Activated CD4-positive, alpha-beta T cell treated with anti-CD3 and anti-CD28 coated beads for 36 hours (primary cell): ENCODE measurements at regions of chr11 and their contacts with region 1.

Region 1: GRCh38 chr11:1852877-1853276 is at the start of gene LSP1:
- DNase-seq: peak; percentile 93
- ATAC-seq: peak; percentile 60
- H3K4me3 Mint-ChIP-seq: peak within 1 kb of the TSS; percentile 97
- H3K27ac Mint-ChIP-seq: peak within 1 kb of the TSS; percentile 98
- H3K4me1 Mint-ChIP-seq: peaks cover 66% of the 10 kb centered on the region
- H3K27me3 Mint-ChIP-seq: no peaks in the 10 kb centered on the region
- total RNA-seq, gene LSP1: 193 to 227 TPM

Region 2: GRCh38 chr11:1763796-1764661 is 88.8 kb before region 1 on chr11 and contains the start of gene CTSD:
- CTCF ChIA-PET with region 1: no interaction called
- POLR2A ChIA-PET with region 1: no interaction called
- intact Hi-C with region 1: loop called in 1 of 2 experiments (anchors 1 kb)
- DNase-seq: peak; percentile 94
- ATAC-seq: peak; percentile 91
- H3K4me3 Mint-ChIP-seq: peak within 1 kb of the TSS; percentile 83
- H3K27ac Mint-ChIP-seq: peak within 1 kb of the TSS; percentile 58
- H3K4me1 Mint-ChIP-seq: peaks cover 35% of the 10 kb centered on the region
- H3K27me3 Mint-ChIP-seq: no peaks in the 10 kb centered on the region
- total RNA-seq, gene CTSD: 38.8 to 41.5 TPM

Region 3: DNA sequence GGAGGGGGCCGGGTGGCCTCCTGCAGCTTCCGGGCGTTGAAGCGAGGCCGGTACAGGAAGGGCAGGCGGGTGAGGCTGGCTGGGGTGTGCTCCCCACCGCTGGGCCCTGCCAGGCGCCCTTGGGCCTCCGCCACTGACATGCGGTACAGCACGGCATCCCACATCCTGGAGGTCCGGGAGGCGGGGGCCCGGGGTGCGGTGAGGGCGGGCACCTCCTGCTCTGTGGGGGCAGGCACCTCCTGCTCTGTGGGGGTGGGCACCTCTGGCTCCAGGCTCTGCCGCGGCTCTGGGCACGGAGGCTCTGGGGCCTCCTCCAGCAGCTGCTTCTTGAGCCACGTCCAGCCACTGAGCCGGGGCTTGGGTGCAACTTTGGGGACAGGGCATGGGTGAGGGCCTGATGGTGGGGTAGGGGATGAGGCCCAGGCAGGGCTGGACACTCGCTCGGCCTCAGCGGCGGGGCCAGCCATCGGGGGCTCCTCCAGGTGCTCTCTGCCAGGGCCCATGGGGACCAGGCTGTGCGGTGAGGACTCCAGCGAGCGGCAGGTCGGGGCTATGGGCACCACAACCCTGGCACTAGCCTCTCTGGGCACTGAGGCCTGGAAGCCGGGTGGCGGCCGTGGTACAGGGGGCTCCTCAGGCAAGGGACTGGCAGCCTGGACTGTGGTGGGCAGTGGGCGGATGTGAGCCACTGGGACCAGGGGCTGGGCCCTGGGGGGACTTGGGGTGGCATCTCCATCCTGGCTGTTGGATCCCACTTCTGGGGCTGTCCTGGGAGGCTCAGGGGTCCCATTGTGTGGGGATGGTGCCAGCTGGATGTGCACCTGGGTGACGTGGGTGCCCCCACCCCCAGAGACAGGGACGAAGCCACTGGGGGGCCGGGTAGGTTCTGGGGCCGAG is 36.6 kb after region 1 on chr11:
- CTCF ChIA-PET with region 1: interaction called, 3 read pairs
- POLR2A ChIA-PET with region 1: no interaction called
- intact Hi-C with region 1: loop called (anchors 1 to 5 kb)
- DNase-seq: peak; percentile 87
- ATAC-seq: peak; percentile 78
- H3K4me3 Mint-ChIP-seq: peak overlapping the region; percentile 73
- H3K27ac Mint-ChIP-seq: peak overlapping the region; percentile 86
- H3K4me1 Mint-ChIP-seq: peaks cover 17% of the 10 kb centered on the region
- H3K27me3 Mint-ChIP-seq: no peaks in the 10 kb centered on the region

Region 4: GRCh38 chr11:2077061-2077802 is 224.4 kb after region 1 on chr11:
- CTCF ChIA-PET with region 1: no interaction called
- POLR2A ChIA-PET with region 1: no interaction called
- intact Hi-C with region 1: loop called in 1 of 2 experiments (anchors 1 kb)
- DNase-seq: peak; percentile 77
- ATAC-seq: peak; percentile 93
- H3K4me3 Mint-ChIP-seq: no peak overlapping the region
- H3K27ac Mint-ChIP-seq: peak overlapping the region; percentile 84
- H3K4me1 Mint-ChIP-seq: peaks cover 21% of the 10 kb centered on the region
- H3K27me3 Mint-ChIP-seq: peaks cover 30% of the 10 kb centered on the region

Region 5: DNA sequence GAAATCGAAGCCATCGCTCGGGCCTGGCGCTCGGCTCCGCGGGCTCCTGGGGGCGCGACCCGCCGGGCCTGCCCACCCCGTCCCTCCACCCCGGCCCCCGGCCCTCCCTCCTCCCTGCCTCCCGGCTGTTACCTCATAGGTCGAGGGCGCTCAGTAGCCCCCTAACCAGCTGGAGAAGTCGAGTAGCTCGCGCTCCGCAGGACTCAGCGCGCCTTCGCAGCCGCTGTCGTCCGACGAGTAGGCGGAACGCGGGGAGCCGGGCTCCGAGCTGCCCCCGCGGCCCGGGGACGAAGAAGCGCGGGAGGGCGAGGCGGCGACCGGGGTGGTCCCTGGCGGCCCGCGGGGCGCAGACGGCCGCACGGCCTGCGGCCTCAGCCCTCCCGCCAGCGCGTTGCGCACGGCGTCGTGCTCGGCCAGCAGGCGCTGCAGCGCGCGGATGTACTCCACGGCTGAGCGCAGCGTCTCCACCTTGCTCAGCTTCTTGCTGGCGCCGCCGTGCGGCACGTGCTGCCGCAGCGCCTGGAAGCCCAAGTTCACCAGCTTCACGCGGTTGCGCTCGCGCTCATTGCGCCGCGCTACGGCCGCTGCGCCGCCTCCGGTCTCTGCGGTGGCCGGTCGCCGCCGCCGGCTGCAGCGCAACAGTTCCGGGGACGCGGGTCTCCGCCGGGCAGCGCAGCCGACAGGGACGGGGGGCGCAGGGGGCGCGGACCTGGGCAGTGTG is 416.9 kb after region 1 on chr11:
- CTCF ChIA-PET with region 1: no interaction called
- POLR2A ChIA-PET with region 1: no interaction called
- intact Hi-C with region 1: loop called in 1 of 2 experiments (anchors 5 kb)
- DNase-seq: peak; percentile 73
- ATAC-seq: peak; percentile 20
- H3K4me3 Mint-ChIP-seq: peak overlapping the region; percentile 52
- H3K27ac Mint-ChIP-seq: no peak overlapping the region
- H3K4me1 Mint-ChIP-seq: peaks cover 22% of the 10 kb centered on the region
- H3K27me3 Mint-ChIP-seq: peaks cover 29% of the 10 kb centered on the region